ENCODE measurements at regions of chr3 and their contacts with region 1.

Region 1: DNA sequence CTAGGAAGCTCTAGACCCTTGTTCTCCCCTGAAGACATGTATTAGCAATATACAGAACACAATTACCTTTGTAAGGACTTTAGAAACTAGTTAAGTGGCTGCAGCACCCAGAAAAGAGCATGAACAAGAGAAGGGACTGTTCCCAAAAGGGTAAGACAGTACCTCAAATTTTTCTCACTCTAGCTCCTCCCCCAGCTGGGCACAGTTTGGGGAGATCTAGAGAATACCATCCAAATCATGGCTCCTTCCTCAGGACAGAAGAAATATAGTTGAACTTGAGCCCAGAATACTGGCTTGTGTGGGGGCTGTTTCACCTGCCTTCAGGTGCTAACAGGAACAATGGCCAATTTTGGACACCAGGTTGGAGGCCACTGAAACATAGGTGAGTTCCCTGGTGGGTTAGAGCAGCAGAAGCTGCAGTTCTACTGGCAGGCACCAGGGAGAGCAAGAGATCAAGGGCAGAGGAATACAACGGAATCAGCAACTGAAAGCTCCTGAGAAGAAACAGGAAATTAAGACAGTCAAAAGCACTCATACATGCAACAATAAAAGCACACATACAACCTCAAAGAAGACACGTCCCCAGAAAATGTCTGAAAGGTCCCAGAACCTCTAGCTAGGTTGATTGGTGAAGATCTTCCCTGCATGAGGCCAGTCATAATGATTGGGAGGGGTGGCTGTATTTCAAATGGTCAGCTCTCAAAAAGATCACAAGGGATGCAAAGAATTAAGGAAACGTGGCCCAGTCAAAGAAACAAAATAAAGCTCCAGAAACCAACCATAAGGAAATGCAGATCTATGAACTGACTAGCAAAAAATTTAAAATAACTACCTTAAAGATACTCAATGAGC is 104.9 kb upstream of the ASB14 start:
- DNase-seq: peak; percentile 26 to 77 (median 48)
- ATAC-seq: peak; percentile 99
- H3K4me3 ChIP-seq: no peak overlapping the region
- H3K4me3 Mint-ChIP-seq: peak overlapping the region; percentile 1
- H3K27ac ChIP-seq: no peak overlapping the region
- H3K27ac Mint-ChIP-seq: peak overlapping the region; percentile 14
- H3K4me1 ChIP-seq: peaks cover 6% of the 10 kb centered on the region
- H3K4me1 Mint-ChIP-seq: peaks cover 16% of the 10 kb centered on the region
- H3K27me3 ChIP-seq: no peaks in the 10 kb centered on the region
- H3K27me3 Mint-ChIP-seq: peaks cover 10% of the 10 kb centered on the region
- CTCF ChIP-seq: peak; percentile 83

Region 2: GRCh38 chr3:57555738-57556458 is 158.5 kb after region 1 on chr3 and contains the start of gene PDE12:
- CTCF ChIA-PET with region 1: interaction called, 3 read pairs
- POLR2A ChIA-PET with region 1: interaction called, 18 read pairs
- intact Hi-C with region 1: no loop called
- DNase-seq: peak; percentile 66 to 92 (median 78)
- ATAC-seq: peak; percentile 67
- H3K4me3 ChIP-seq: peak within 1 kb of the TSS; percentile 88
- H3K4me3 Mint-ChIP-seq: peak within 1 kb of the TSS; percentile 94
- H3K27ac ChIP-seq: peak within 1 kb of the TSS; percentile 84 to 98
- H3K27ac Mint-ChIP-seq: peak within 1 kb of the TSS; percentile 93
- H3K4me1 ChIP-seq: peaks cover 34% of the 10 kb centered on the region
- H3K4me1 Mint-ChIP-seq: peaks cover 45% of the 10 kb centered on the region
- H3K27me3 ChIP-seq: no peaks in the 10 kb centered on the region
- H3K27me3 Mint-ChIP-seq: no peaks in the 10 kb centered on the region
- CTCF ChIP-seq: no peak
- total RNA-seq, gene PDE12: 40.5 to 40.9 TPM

Region 3: DNA sequence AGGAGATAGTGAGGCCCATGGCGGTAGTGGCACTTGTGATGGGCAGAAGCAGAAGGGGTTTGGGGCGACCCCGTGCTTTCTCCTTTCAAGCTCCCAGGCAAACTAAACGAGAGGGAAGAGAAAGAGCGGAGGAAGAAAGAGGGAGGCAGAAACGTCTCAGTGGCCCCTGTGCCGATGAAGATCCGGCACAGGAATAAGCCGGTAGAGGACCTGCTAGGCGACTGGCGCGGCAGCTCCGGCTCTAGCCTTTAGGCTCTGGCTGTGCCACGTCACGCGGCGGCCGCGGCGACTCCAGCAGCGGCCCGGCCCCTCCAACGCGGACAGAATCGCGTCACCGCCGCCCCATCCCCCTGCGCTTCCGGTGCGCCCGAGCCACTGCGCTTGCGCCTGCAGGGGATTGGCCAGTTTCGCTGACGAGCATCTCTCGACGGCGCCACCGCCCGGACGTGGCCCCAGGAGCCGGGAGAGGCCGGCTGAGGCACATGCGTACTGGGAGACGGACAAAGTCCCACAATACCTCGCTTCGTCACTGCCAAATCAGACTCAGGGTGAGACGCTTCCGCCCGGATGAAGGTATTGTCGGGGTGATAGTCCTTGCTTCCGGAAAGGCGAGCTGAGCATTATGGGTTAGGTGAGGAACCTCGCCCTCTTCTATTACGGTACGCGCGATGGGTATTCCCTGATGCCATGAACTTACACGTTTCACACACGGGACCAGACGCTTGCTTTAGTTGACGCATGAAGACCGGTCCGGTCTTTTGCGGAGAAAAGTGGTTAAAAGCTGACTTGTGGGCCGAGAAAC is 199.9 kb after region 1 on chr3 and contains the start of gene ARF4:
- CTCF ChIA-PET with region 1: interaction called, 4 read pairs
- POLR2A ChIA-PET with region 1: interaction called, 14 read pairs
- intact Hi-C with region 1: no loop called
- DNase-seq: peak; percentile 97 to 100 (median 99)
- ATAC-seq: peak; percentile 87
- H3K4me3 ChIP-seq: peak within 1 kb of the TSS; percentile 92
- H3K4me3 Mint-ChIP-seq: peak within 1 kb of the TSS; percentile 85
- H3K27ac ChIP-seq: peak within 1 kb of the TSS; percentile 98 to 99
- H3K27ac Mint-ChIP-seq: peak within 1 kb of the TSS; percentile 97
- H3K4me1 ChIP-seq: peaks cover 33% of the 10 kb centered on the region
- H3K4me1 Mint-ChIP-seq: peaks cover 58% of the 10 kb centered on the region
- H3K27me3 ChIP-seq: no peaks in the 10 kb centered on the region
- H3K27me3 Mint-ChIP-seq: no peaks in the 10 kb centered on the region
- CTCF ChIP-seq: peak; percentile 48
- total RNA-seq, gene ARF4: 56.7 to 59.9 TPM

Region 4: GRCh38 chr3:57826245-57826951 is 429.0 kb after region 1 on chr3:
- CTCF ChIA-PET with region 1: interaction called, 5 read pairs
- POLR2A ChIA-PET with region 1: interaction called, 3 read pairs
- intact Hi-C with region 1: loop called in 1 of 2 experiments (anchors 5 kb)
- DNase-seq: peak in 1 of 14 experiments; percentile 23
- ATAC-seq: no peak
- H3K4me3 ChIP-seq: no peak overlapping the region
- H3K4me3 Mint-ChIP-seq: no peak overlapping the region
- H3K27ac ChIP-seq: no peak overlapping the region
- H3K27ac Mint-ChIP-seq: no peak overlapping the region
- H3K4me1 ChIP-seq: no peaks in the 10 kb centered on the region
- H3K4me1 Mint-ChIP-seq: peaks cover 37% of the 10 kb centered on the region
- H3K27me3 ChIP-seq: no peaks in the 10 kb centered on the region
- H3K27me3 Mint-ChIP-seq: no peaks in the 10 kb centered on the region
- CTCF ChIP-seq: peak; percentile 56

Region 5: DNA sequence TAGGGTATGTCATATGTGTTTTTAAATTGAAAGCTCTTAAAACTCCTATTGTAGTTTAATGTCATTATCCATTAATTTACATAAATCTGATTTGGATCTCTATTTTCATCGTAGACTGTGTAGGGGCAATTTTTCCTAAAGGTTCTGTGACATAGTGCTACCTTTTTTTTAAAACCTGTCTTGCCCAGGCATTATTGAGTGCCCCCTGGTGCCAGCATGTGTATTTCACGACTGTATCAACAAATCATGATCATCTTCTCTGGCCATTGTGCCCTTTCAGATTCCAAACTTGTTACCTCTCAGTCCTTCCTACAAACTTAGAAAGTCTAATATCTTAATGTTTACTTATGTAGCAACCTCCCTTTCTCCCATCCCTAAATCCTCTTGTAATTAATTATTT is 513.6 kb after region 1 on chr3:
- CTCF ChIA-PET with region 1: interaction called, 3 read pairs
- POLR2A ChIA-PET with region 1: no interaction called
- intact Hi-C with region 1: loop called in 1 of 2 experiments (anchors 10 kb)
- DNase-seq: peak in 9 of 14 experiments; percentile 2 to 42 (median 8)
- ATAC-seq: no peak
- H3K4me3 ChIP-seq: no peak overlapping the region
- H3K4me3 Mint-ChIP-seq: no peak overlapping the region
- H3K27ac ChIP-seq: no peak overlapping the region
- H3K27ac Mint-ChIP-seq: no peak overlapping the region
- H3K4me1 ChIP-seq: no peaks in the 10 kb centered on the region
- H3K4me1 Mint-ChIP-seq: no peaks in the 10 kb centered on the region
- H3K27me3 ChIP-seq: no peaks in the 10 kb centered on the region
- H3K27me3 Mint-ChIP-seq: no peaks in the 10 kb centered on the region
- CTCF ChIP-seq: peak; percentile 56